Sigmoid colon (tissue), 7 donors: ENCODE measurements at regions of chrX and their contacts with region 1.

Region 1: DNA sequence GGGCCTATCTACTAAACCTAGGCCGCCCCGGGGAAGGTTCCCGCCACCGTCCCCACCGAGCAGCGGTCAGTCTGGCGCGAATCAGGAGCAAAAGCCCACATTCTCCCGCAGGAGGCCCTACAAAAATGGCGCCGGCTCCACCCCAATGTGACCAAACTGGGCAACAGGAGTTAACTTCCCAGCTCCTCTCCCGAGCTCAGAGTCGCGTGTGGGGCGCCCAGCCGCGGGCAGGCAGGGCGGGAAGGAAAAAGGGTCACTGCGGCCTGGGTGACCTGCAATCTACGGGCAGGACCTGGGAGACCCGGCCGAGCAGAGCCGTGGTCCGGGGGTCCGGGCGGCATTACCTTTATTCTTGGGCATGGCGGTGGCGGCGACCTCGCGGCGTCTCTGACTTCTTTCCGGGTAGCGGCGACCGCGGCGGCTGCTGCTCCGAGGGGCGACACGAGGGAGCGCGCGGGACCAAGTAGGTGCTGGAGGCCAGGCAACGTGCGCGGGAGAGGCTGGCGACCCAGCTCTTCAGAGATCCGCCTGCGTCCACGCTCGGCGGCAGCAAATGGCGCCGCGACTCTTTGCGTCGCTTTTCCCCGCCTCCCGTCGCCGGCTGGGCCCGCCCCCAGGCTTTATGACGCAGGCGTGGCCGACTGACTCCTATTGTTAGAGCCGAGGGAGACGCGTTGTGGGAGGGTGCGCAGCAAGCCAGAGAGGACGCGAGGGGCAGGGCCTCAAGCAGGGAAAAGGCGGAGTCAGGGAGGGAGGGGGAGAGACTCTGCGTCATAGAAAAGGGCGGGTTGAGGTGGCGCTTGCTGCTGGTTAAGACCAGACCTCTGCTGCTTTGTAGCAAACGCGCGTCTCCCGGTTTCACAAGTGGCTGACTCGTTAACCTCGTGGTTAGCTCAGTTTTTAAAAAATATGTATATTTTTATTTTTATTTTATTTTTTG is at the start of gene EIF1AX:
- DNase-seq: peak; percentile 100
- H3K4me3 ChIP-seq: peak within 1 kb of the TSS; percentile 69 to 81 (median 76)
- H3K27ac ChIP-seq: peak within 1 kb of the TSS; percentile 90 to 94 (median 92)
- H3K4me1 ChIP-seq: peaks cover 0 to 35% (median 9%) of the 10 kb centered on the region in 4 donors
- H3K27me3 ChIP-seq: no peaks in the 10 kb centered on the region
- CTCF ChIP-seq: no peak
- EP300 ChIP-seq: peak in 1 of 4 donors; percentile 24
- POLR2A ChIP-seq: peak; percentile 81 to 91
- total RNA-seq, gene EIF1AX: 38.8 to 75.7 (median 57.6) TPM

Region 2: DNA sequence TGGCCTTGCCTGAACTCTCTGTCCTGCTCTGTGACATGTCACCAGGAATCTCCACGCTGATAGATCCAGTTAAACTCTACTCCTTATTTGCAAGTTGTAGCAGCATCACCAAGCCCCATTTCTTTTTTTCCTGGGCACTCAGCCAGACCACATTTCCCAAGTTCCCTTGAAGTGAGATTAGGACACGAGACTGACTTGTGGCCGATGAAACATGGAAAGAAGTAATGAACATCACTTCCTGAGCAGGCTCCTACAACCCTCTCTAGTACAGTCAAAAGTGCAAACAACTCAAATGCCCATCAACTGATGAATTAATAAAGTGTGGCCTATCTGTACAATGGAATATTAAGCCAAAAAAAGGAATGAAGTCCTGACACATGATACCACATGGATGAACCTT is 700.8 kb before region 1 on chrX:
- intact Hi-C with region 1: no loop called
- DNase-seq: no peak
- H3K4me3 ChIP-seq: no peak overlapping the region
- H3K27ac ChIP-seq: no peak overlapping the region
- H3K4me1 ChIP-seq: no peaks in the 10 kb centered on the region
- H3K27me3 ChIP-seq: no peaks in the 10 kb centered on the region
- CTCF ChIP-seq: no peak
- EP300 ChIP-seq: no peak
- POLR2A ChIP-seq: no peak

Region 3: DNA sequence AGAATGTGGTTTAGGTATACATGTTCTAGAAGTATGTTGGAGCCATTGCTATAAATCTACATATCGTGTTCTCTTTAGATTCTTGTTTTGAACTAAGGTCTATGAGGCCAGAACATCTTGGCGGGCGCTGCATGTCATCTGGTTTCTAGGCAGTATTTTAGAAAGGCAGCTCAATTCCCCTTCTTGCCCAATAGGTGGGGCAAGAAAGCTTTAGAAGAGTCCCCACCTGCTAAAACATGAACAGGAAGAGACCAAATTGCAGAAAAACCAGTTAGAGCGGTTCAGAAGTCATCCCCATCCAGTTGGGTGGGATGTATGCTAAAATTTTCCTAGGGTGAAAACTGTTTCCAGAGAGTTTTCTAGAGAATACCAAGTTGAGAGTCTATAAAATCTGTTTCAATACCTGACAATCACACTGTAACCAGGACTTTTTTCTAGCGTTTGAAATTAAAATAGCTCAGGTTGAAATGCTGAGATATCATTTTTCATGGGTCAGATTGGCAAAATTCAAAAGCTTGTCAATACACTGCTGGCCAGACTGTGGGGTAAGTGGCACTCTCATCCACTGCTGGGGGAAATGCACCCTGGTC is 236.7 kb before region 1 on chrX:
- intact Hi-C with region 1: loop called (anchors 10 kb)
- DNase-seq: no peak
- H3K4me3 ChIP-seq: no peak overlapping the region
- H3K27ac ChIP-seq: no peak overlapping the region
- H3K4me1 ChIP-seq: no peaks in the 10 kb centered on the region
- H3K27me3 ChIP-seq: no peaks in the 10 kb centered on the region
- CTCF ChIP-seq: peak in 3 of 4 experiments; percentile 28 to 51 (median 30)
- EP300 ChIP-seq: no peak
- POLR2A ChIP-seq: no peak

Region 4: DNA sequence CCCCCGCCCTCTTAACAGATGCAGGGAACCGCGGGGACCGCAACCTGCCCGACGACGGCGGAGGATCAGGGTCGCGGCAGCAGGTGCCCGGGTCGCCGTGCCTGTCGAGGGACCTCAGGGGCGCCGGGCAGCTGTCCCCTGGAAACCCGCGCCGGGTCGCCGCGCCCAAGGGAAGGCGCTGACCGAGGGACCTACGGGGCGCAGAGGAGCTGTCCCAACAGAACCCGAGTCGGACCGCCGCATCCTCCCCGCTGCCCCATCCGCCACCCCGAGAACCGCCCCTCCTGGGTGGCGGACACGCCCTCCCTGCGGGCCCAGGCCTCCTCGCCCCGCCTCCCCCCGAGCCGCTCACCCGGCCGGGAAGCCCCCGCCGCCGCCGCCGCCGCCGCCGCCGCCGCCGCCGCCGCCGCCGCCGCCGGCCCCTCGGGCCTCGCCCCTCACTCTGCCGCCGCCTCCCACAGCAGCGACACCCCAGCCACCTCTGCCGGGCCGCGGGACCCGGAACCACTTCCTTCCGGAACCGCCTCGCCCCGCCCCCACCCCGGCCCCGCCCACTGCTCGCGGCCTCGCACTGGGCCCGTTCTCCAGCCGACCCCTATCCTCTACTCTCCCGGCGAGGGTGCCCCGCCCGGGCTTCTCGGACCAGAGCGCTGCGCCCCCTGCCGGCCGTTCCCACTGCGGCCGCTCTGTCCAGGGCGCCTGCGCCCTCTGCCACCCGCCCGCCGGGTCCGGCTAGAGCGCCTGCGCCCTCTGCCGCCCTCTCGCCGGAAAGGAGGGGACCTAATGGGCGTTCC is 150.8 kb before region 1 on chrX and contains the start of gene BCLAF3:
- intact Hi-C with region 1: loop called (anchors 10 kb)
- DNase-seq: peak; percentile 93
- H3K4me3 ChIP-seq: peak within 1 kb of the TSS; percentile 65 to 82 (median 75)
- H3K27ac ChIP-seq: peak within 1 kb of the TSS; percentile 77 to 82 (median 78)
- H3K4me1 ChIP-seq: no peaks in the 10 kb centered on the region
- H3K27me3 ChIP-seq: no peaks in the 10 kb centered on the region
- CTCF ChIP-seq: peak; percentile 35 to 71 (median 56)
- EP300 ChIP-seq: no peak
- POLR2A ChIP-seq: no peak
- total RNA-seq, gene BCLAF3: 7.9 to 16.3 (median 9.8) TPM

Region 5: GRCh38 chrX:20266810-20267606 is 125.5 kb after region 1 on chrX and contains the start of gene RPS6KA3:
- intact Hi-C with region 1: loop called (anchors 5 kb)
- DNase-seq: peak; percentile 95
- H3K4me3 ChIP-seq: peak within 1 kb of the TSS; percentile 52 to 73 (median 69)
- H3K27ac ChIP-seq: peak within 1 kb of the TSS; percentile 85 to 92 (median 90)
- H3K4me1 ChIP-seq: peaks cover 0 to 22% (median 13%) of the 10 kb centered on the region in 4 donors
- H3K27me3 ChIP-seq: no peaks in the 10 kb centered on the region
- CTCF ChIP-seq: no peak
- EP300 ChIP-seq: no peak
- POLR2A ChIP-seq: peak; percentile 23 to 59
- total RNA-seq, gene RPS6KA3: 34.3 to 41.9 (median 40.2) TPM